ENCODE measurements at regions of chr18 and their contacts with region 1.

Region 1: DNA sequence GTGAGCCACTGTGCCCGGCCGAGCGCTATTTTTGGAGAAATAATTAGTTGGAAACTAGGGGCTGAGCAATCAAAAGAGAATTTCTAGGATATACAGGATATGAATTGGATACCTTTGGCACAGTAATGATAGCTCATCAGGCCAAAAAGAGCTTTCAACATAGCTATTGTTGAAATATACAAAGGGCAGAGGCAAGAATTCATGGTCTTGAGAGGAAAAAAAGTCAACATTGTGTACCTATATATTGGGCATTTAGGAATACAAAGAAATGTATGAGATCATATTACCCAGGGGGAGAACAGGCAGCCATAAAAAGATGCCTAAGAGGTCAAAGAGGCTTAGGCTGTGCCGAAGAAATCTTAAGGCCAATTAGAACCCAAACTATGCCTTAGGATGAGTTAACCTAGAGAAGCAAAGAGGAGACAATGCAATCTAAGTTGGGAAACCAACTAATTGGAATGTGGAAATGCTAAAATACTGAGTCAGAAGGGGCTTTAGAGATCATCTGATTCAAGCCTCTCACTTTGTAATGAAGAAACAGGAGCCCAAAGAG is 99.0 kb downstream of the RBBP8 start:
- H3K4me3 Mint-ChIP-seq: no peak overlapping the region
- H3K27ac Mint-ChIP-seq: no peak overlapping the region
- H3K4me1 Mint-ChIP-seq: peaks cover 5% of the 10 kb centered on the region
- H3K27me3 Mint-ChIP-seq: no peaks in the 10 kb centered on the region

Region 2: GRCh38 chr18:23337599-23338444 is 305.7 kb after region 1 on chr18:
- intact Hi-C with region 1: no loop called
- H3K4me3 Mint-ChIP-seq: no peak overlapping the region
- H3K27ac Mint-ChIP-seq: no peak overlapping the region
- H3K4me1 Mint-ChIP-seq: no peaks in the 10 kb centered on the region
- H3K27me3 Mint-ChIP-seq: no peaks in the 10 kb centered on the region

Region 3: GRCh38 chr18:23377669-23378301 is 345.7 kb after region 1 on chr18:
- intact Hi-C with region 1: loop called (anchors 10 kb)
- H3K4me3 Mint-ChIP-seq: no peak overlapping the region
- H3K27ac Mint-ChIP-seq: no peak overlapping the region
- H3K4me1 Mint-ChIP-seq: no peaks in the 10 kb centered on the region
- H3K27me3 Mint-ChIP-seq: no peaks in the 10 kb centered on the region

Region 4: DNA sequence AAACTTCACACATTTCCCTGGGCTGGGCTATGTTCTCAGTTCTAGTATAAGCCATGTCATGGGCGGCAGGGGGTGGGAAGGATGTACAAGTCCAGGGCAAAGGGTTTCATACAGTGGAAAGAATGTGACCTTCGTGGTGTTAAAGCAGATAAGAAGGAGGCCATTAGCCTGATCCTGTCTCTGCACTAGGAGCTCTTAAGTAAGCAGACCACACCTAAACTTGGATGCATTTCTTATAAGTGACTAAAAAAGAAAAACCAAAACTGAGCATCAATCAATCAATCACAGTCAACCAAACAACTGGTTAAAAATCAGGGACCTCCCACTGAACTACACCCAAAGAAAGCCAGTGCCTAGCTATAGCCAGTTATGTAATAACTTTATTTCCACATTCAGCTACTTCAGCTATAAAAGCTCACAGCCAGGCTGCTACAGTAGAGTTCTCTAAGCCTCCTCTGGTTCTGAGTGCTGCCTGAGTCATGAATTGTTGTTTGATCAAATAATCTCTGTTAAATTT is 374.2 kb after region 1 on chr18:
- intact Hi-C with region 1: loop called (anchors 1 kb)
- H3K4me3 Mint-ChIP-seq: no peak overlapping the region
- H3K27ac Mint-ChIP-seq: no peak overlapping the region
- H3K4me1 Mint-ChIP-seq: no peaks in the 10 kb centered on the region
- H3K27me3 Mint-ChIP-seq: no peaks in the 10 kb centered on the region